Naive thymus-derived CD8-positive, alpha-beta T cell (primary cell): ENCODE measurements at regions of chr12 and their contacts with region 1.

Region 1: GRCh38 chr12:53344824-53345485 is 8.8 kb upstream of the SP7 start:
- DNase-seq: peak; percentile 46 to 85 (median 64)
- ATAC-seq: peak; percentile 67 to 85
- H3K4me3 Mint-ChIP-seq: peak overlapping the region; percentile 92 to 100 (median 98)
- H3K27ac Mint-ChIP-seq: peak overlapping the region; percentile 84 to 97 (median 92)
- H3K4me1 Mint-ChIP-seq: peaks cover 17 to 25% (median 18%) of the 10 kb centered on the region in 4 donors
- H3K27me3 Mint-ChIP-seq: peaks cover 0 to 10% (median 1%) of the 10 kb centered on the region in 5 donors

Region 2: DNA sequence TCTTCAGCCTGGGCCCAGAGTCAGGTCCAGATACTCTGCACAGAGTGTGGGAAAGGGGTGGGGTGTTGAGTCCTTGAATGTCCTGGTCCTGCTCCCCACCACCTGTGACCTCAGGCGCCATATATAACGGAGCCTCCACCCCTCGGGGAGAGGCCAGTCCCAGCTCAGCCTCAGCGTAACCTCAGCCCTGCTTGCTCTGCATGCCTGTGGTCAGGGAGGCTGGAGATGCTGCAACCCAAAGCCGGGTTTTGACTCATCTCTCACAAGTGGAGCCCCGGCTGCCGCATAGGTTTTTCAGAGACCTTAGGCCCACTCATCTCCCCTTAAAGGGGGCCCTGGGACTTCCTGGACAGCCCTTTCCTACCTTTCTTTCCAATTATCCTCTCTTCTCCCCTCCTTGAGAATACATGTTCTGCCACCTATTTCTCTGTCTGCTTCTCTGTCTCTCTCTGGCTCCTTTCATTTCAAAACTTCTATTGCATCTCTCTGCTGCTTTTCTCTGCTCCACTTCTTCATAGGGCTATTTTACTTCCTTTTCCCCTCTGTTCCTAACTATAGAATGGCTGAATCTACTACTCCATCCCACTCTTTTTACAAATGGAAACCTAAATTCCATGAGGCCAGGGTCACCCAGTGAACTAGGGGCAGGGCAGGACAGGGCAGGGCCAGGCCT is 139.1 kb before region 1 on chr12:
- POLR2A ChIA-PET with region 1: no interaction called
- DNase-seq: peak in 2 of 10 donors; percentile 44 to 55
- ATAC-seq: peak; percentile 26 to 58
- H3K4me3 Mint-ChIP-seq: peak overlapping the region; percentile 77 to 95 (median 90)
- H3K27ac Mint-ChIP-seq: peak overlapping the region; percentile 83 to 98 (median 92)
- H3K4me1 Mint-ChIP-seq: peaks cover 39 to 92% (median 74%) of the 10 kb centered on the region in 4 donors
- H3K27me3 Mint-ChIP-seq: no peaks in the 10 kb centered on the region

Region 3: DNA sequence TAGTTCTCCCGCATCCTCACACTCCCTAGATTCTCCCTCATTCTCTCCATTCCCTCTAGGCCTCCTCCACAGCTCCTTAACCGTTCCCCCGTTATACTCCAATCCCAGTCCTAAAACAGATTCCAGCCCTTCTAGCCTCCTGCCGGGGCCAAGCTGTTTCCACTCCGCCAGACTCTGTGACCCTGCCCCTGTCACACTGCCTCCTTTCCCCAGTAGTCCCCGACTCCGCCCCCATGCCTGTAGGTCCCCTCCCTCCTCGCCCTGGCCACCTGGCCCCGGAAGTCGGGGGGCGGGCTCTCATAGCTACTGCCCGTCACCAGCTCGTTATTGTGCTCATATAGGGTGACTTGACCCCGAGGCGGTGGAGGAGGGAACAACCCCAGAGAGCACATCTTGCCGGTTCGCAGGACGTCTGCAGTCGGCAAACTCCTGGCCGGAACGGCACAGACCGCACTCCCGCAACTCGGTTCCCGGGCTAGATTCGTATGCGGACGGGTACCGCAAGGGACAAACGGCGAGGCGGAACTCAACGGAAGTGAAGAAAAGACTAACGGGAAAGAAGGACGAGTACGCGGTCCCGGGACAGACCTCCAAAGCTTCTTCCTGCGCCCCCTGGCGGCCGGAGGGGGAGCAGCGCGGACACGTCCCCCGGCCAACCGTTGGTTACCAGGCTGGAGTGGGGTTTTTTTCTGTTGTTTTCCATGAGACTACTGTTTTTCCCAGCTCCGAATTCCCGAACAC is 23.7 kb before region 1 on chr12 and contains the start of gene AAAS:
- POLR2A ChIA-PET with region 1: interaction called, 80 read pairs
- DNase-seq: peak; percentile 87 to 99 (median 92)
- ATAC-seq: peak; percentile 77 to 78
- H3K4me3 Mint-ChIP-seq: peak within 1 kb of the TSS; percentile 90 to 100 (median 98)
- H3K27ac Mint-ChIP-seq: peak within 1 kb of the TSS; percentile 96 to 99 (median 97)
- H3K4me1 Mint-ChIP-seq: peaks cover 28 to 51% (median 45%) of the 10 kb centered on the region in 4 donors
- H3K27me3 Mint-ChIP-seq: no peaks in the 10 kb centered on the region
- polyA plus RNA-seq, gene AAAS: 34.1 to 57.2 (median 39.3) TPM

Region 4: DNA sequence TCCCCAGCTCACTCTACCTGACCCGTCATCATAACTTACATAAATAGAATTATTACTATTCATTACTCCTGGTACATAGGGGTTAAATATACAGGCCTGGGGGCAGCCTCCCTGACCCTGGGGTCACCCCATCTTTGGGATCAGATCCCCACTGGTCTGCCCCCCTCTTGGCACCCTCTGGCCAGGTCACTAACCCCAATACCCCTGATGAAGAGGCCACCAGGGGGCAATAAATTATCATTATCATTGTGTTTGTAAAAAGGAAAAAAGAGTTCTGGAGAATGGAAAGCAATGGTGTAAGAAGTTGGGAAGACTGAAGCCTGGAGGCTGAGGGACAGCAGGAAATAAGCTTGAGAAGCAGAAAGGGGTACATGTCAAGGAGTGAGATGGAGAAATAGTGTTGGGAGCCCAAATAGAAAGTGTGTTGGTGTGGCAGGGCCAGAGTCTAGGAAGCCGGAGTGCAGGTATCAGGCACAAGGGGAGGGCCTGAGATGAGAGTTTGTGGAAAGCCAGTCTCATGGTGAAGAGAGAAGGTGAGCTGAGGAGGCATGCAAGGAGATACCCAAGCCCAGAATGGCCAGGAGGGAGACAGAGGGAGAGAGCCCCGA is 17.4 kb before region 1 on chr12:
- POLR2A ChIA-PET with region 1: interaction called, 80 read pairs
- DNase-seq: no peak
- ATAC-seq: no peak
- H3K4me3 Mint-ChIP-seq: peak overlapping the region in 6 of 10 donors; percentile 2 to 81 (median 48)
- H3K27ac Mint-ChIP-seq: peak overlapping the region in 5 of 10 donors; percentile 6 to 54 (median 28)
- H3K4me1 Mint-ChIP-seq: peaks cover 15 to 23% (median 20%) of the 10 kb centered on the region in 4 donors
- H3K27me3 Mint-ChIP-seq: peaks cover 0 to 10% (median 4%) of the 10 kb centered on the region in 5 donors

Region 5: GRCh38 chr12:53365245-53365904 is 20.4 kb after region 1 on chr12:
- POLR2A ChIA-PET with region 1: no interaction called
- DNase-seq: no peak
- ATAC-seq: no peak
- H3K4me3 Mint-ChIP-seq: peak overlapping the region in 3 of 10 donors; percentile 9 to 48 (median 15)
- H3K27ac Mint-ChIP-seq: peak overlapping the region in 9 of 10 donors; percentile 16 to 88 (median 79)
- H3K4me1 Mint-ChIP-seq: peaks cover 4 to 21% (median 14%) of the 10 kb centered on the region in 4 donors
- H3K27me3 Mint-ChIP-seq: no peaks in the 10 kb centered on the region